ENCODE measurements at regions of chr3 and their contacts with region 1.

Region 1: GRCh38 chr3:132016061-132017041 is 18.5 kb downstream of the CPNE4 start:
- DNase-seq: no peak
- H3K4me3 ChIP-seq: no peak overlapping the region
- H3K27ac ChIP-seq: no peak overlapping the region
- H3K27me3 ChIP-seq: peaks cover 0 to 26% (median 0%) of the 10 kb centered on the region in 45 donors
- CTCF ChIP-seq: no peak

Region 2: DNA sequence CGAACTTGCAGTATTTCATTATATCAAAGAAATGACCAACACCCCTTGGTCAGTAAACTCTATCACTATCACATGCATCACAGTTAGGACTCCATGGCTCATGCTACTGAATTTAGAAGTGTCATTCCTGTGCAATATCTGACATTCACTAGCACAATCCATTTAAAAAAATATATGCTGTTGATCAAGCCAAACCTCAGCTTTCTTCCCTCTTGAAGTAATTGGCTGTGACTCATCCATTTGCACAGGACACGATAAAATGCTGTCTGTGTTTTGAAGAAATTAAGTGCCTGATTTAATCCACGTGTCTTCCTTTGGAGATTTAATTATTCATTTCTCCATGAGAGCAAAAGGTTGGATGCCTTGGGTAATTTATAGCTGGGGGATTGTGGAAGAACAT is 20.5 kb before region 1 on chr3:
- intact Hi-C with region 1: loop called in 1 of 2 experiments (anchors 2 kb)
- DNase-seq: no peak
- H3K4me3 ChIP-seq: no peak overlapping the region
- H3K27ac ChIP-seq: no peak overlapping the region
- H3K27me3 ChIP-seq: peaks cover 0 to 4% (median 0%) of the 10 kb centered on the region in 45 donors
- CTCF ChIP-seq: no peak

Region 3: GRCh38 chr3:132253262-132253878 is 237.0 kb after region 1 on chr3:
- intact Hi-C with region 1: no loop called
- DNase-seq: no peak
- H3K4me3 ChIP-seq: no peak overlapping the region
- H3K27ac ChIP-seq: no peak overlapping the region
- H3K27me3 ChIP-seq: no peaks in the 10 kb centered on the region
- CTCF ChIP-seq: peak; percentile 30 to 80 (median 67)